ENCODE measurements at regions of chr1 and their contacts with region 1.

Region 1: DNA sequence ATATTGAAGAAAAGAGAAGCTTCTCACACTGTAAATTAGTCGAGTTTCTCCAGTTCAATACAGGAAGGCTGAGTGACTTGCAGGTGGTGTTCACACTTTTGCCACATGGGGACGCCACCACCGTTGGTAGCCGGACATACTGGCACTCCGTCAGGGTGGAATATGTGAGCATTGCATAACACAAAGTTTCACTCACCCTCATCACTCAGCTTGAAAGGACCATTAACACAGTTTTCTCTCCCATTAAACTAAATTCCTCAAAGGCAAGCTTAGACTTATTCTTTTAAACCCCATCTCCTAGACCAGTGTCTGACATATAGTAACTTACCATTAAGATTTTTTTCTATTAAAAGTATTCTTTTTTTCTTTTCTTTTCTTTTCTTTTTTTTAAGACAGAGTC is 105.3 kb upstream of the SERBP1 start:
- DNase-seq: no peak
- H3K4me3 ChIP-seq: no peak overlapping the region
- H3K27ac ChIP-seq: no peak overlapping the region
- H3K4me1 ChIP-seq: peaks cover 6% of the 10 kb centered on the region
- H3K27me3 ChIP-seq: no peaks in the 10 kb centered on the region
- CTCF ChIP-seq: peak; percentile 80 to 95 (median 90)
- POLR2A ChIP-seq: no peak

Region 2: DNA sequence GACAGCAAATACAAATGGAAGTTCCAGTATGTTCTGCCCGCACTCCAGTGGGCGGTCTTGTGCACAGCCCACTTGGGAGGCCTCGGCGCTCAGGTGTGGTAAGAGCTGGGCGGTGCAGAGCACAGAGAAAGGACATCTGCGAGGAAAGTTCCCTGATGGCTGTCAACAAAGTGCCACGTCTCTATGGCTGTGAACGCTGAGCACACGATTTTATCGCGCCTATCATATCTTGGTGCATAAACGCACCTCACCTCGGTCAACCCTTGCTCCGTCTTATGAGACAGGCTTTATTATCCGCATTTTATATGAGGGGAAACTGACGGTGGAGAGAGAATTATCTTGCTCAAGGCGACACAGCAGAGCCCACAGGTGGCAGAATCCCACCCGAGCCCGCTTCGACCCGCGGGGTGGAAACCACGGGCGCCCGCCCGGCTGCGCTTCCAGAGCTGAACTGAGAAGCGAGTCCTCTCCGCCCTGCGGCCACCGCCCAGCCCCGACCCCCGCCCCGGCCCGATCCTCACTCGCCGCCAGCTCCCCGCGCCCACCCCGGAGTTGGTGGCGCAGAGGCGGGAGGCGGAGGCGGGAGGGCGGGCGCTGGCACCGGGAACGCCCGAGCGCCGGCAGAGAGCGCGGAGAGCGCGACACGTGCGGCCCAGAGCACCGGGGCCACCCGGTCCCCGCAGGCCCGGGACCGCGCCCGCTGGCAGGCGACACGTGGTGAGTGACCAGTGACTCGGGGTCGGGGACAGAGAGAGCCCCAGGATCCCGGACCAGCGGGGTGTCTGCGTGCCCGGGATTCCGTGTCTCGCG is 228.0 kb before region 1 on chr1 and contains the start of gene IL12RB2:
- intact Hi-C with region 1: no loop called
- DNase-seq: no peak
- H3K4me3 ChIP-seq: peak within 1 kb of the TSS; percentile 41
- H3K27ac ChIP-seq: no peak within 1 kb of the TSS
- H3K4me1 ChIP-seq: peaks cover 8% of the 10 kb centered on the region
- H3K27me3 ChIP-seq: no peaks in the 10 kb centered on the region
- CTCF ChIP-seq: no peak
- POLR2A ChIP-seq: no peak
- total RNA-seq, gene IL12RB2: 0.74 TPM

Region 3: GRCh38 chr1:67489643-67490042 is 45.8 kb before region 1 on chr1:
- intact Hi-C with region 1: no loop called
- DNase-seq: no peak
- H3K4me3 ChIP-seq: no peak overlapping the region
- H3K27ac ChIP-seq: no peak overlapping the region
- H3K4me1 ChIP-seq: no peaks in the 10 kb centered on the region
- H3K27me3 ChIP-seq: no peaks in the 10 kb centered on the region
- CTCF ChIP-seq: peak in 1 of 3 experiments; percentile 16
- POLR2A ChIP-seq: no peak

Region 4: GRCh38 chr1:67760030-67760821 is 224.8 kb after region 1 on chr1:
- intact Hi-C with region 1: loop called (anchors 2 kb)
- DNase-seq: peak in 1 of 2 donors; percentile 82
- H3K4me3 ChIP-seq: no peak overlapping the region
- H3K27ac ChIP-seq: peak overlapping the region; percentile 40
- H3K4me1 ChIP-seq: peaks cover 33% of the 10 kb centered on the region
- H3K27me3 ChIP-seq: no peaks in the 10 kb centered on the region
- CTCF ChIP-seq: peak; percentile 83 to 94 (median 85)
- POLR2A ChIP-seq: no peak

Region 5: DNA sequence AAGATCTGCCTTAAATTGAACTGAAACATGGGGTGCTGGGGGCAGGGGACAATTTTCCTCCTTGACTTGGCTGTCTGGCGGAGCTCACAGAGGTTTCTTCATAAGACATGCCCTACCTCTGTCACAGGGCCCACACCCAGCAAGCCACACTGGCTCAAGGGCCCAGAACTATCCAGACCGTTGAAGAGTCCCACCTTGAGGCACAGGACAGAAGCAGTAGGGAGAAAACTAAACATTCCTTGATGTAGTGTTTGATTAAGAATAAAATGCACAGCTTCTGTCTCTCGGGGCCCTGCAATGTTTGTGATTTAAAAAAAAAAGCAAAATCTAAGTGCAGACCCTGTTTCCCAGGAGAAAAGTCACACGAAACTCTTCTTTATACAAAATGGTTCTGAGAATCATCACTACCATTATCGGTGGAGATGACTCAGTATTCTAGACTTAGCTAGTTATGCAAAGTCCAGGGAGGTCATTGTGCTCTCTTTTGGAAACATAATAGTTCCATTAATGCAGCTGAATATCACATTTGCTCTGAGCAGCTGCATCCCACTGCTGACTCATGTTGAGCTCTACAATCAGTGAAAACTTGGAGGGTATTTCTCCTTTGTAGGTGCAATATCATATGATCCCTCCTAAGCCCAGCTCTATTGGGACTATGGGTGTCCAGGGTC is 568.5 kb after region 1 on chr1:
- intact Hi-C with region 1: loop called (anchors 10 kb)
- DNase-seq: no peak
- H3K4me3 ChIP-seq: no peak overlapping the region
- H3K27ac ChIP-seq: peak overlapping the region; percentile 34
- H3K4me1 ChIP-seq: no peaks in the 10 kb centered on the region
- H3K27me3 ChIP-seq: no peaks in the 10 kb centered on the region
- CTCF ChIP-seq: no peak
- POLR2A ChIP-seq: no peak